ENCODE measurements at regions of chr22 and their contacts with region 1.

Region 1: GRCh38 chr22:19271856-19272535 is 19.5 kb downstream of the CLTCL1 start:
- DNase-seq: no peak
- CTCF ChIP-seq: no peak

Region 2: DNA sequence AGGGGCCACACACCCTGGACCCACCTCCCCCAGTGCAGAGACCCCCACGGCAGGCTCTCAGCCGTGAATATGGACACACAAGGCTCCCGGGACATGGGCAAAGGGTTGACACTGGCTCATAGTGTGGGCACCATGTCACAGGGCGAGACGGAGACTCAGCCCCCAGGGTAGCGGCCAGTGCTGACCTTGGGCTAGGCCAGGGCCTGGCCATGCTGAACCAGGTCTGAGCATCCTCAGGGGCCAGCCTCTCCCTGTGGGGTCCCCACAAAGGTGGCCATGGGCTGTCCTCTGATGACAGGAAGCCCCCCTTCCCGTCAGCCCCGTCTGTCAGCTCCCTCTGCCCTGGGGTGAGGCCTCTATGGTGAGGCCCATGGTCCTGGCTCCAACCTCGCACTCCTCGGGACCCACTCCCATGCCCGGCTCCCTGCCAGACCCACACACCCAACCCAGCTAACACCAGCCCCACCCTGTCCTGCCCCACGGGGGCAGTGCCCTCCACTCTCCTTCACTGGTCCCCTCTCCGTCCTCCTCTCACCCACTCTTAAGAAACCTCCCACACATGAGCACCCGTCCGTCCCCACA is 316.9 kb before region 1 on chr22:
- in situ Hi-C with region 1: no loop called
- DNase-seq: no peak
- CTCF ChIP-seq: no peak

Region 3: GRCh38 chr22:19016081-19016766 is 255.8 kb before region 1 on chr22:
- in situ Hi-C with region 1: loop called (anchors 25 kb)
- DNase-seq: no peak
- CTCF ChIP-seq: no peak

Region 4: DNA sequence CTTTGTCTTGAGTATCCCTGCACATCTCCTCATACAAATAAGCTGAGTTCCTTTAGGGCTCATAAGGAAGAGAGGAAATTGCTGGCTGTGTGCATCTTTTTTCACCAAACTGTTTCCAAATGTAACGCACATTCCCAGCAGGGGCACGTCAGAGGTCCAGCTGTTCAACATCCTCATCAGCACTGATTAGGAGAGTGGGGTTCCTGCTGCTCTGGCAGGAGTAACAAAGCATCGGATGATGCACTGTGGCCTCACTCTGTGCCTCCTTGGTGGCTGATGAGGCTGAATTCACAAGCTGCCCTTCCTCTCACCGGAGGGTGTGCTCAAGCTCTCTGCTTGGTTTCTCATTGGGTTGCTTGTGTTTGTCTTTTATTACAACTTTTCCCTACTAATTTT is 57.9 kb before region 1 on chr22:
- in situ Hi-C with region 1: no loop called
- DNase-seq: no peak
- CTCF ChIP-seq: no peak

Region 5: GRCh38 chr22:19629720-19630419 is 357.9 kb after region 1 on chr22:
- in situ Hi-C with region 1: loop called (anchors 25 kb)
- DNase-seq: peak; percentile 93
- CTCF ChIP-seq: peak; percentile 88

Measured in GM13976 (cell line).